ENCODE measurements at regions of chr19 and their contacts with region 1.

Region 1: DNA sequence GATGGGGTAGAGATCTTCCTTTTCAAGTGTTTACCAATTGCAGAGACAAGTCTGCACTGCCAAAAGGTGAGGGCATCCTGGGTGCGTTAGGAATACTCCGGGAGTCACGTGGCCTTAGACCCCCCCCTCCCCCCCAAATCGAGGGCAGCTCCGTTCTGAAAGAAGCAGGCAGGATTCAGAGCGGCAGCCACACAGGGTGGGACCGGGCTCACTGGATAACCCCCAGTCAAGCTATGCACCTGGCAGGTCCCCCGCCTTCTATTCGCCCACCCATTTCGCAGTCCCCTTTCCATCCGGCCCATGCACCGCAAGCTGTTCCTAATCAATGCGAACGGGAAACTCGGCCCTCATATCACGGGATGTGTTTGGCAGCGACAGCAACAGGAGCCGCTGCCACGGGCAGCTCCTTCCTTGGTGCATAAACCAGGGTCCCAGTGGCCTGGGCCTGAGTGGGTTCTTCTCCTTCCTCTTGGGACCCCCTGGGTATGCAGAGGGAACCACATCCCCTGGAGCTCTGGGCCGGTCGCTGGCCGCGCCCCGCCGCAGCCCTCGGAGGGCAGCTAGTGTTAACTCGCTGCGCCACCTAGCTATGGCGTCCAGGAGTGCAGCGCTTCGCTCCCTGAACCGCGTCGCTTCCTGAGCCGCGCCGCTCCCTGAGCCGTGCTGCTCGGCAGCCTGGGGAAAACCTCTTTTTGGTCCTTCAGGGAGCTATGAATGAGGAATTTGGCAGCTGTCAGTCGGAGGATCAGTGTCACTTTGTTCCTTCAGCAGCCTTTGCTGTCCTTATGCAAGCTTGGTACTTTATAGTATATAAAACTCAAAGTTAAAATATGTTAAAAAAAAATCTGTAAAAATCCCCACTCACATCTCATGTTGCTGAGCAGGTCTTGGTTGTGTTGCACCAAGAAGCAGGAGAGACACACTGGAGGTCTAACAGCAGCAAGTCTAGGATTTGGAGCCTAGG is 41.4 kb downstream of the LYL1 start:
- DNase-seq: peak; percentile 11
- ATAC-seq: peak; percentile 99
- H3K4me3 ChIP-seq: peak overlapping the region; percentile 34; the same call in 1 of the 2 replicates
- H3K27ac ChIP-seq: no peak overlapping the region
- H3K4me1 ChIP-seq: no peaks in the 10 kb centered on the region
- H3K27me3 ChIP-seq: peaks cover 9 to 11% of the 10 kb centered on the region in 2 experiments
- CTCF ChIP-seq: peak; percentile 94 to 97 (median 96); a peak in 5 of 6 replicates
- EP300 ChIP-seq: no peak
- POLR2A ChIP-seq: no peak
- RAD21 ChIP-seq: peak; percentile 80

Region 2: GRCh38 chr19:12610540-12611360 is 450.5 kb before region 1 on chr19 and contains the starts of genes ZNF490 and ZNF791:
- CTCF ChIA-PET with region 1: no interaction called
- POLR2A ChIA-PET with region 1: no interaction called
- RAD21 ChIA-PET with region 1: no interaction called
- SMC1A ChIA-PET with region 1: no interaction called
- in situ Hi-C with region 1: no loop called
- intact Hi-C with region 1: no loop called
- DNase-seq: peak; percentile 89
- ATAC-seq: peak; percentile 83
- H3K4me3 ChIP-seq: peak within 1 kb of the TSS; percentile 96
- H3K27ac ChIP-seq: peak within 1 kb of the TSS; percentile 95
- H3K4me1 ChIP-seq: 0 out of 2 replicates have a peak, but pooled peaks cover 7% of the 10 kb centered on the region
- H3K27me3 ChIP-seq: no peaks in the 10 kb centered on the region
- CTCF ChIP-seq: no peak
- EP300 ChIP-seq: 0 out of 4 replicates have a peak, but pooled peaks of 1 of the 2 experiments have one; percentile 16
- POLR2A ChIP-seq: peak; percentile 98
- RAD21 ChIP-seq: no peak
- polyA plus RNA-seq, gene ZNF490: 0.57 to 1.4 TPM
- polyA plus RNA-seq, gene ZNF791: 7.5 to 9.2 TPM

Region 3: DNA sequence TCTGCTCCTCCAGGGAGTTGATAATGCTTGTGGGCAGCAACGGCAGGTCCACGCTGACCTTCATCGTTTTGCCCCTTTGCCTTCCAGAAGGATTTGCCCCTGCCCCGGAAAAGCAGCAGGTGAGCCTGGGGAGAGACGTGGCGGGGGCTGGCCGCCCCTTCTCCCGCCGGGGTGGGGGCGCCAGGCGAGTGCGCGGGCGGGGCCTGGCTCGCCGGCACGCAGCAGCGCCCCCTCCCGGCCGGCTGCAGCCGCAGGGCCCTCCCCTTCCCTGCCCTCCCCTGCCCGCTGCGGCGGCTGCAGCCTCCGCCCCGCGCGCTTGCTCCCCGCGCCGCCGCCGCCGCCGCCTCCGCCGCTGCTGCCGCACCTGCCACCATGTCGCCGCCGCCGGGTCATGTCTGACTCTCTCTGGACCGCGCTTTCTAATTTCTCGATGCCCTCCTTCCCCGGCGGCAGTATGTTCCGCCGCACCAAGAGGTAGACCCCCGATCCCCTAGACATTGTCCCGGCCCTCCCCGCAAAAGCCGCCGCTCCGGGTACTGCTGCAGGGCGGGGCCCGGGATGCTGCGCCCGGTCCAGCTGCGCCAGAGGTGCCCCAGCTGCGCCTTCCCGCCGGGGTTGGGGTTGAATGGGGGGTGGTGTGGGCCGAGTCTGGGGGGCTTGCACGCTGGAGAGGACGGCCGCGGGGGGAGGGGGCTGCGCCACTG is 222.9 kb before region 1 on chr19 and contains the start of gene MAST1:
- CTCF ChIA-PET with region 1: no interaction called
- POLR2A ChIA-PET with region 1: no interaction called
- RAD21 ChIA-PET with region 1: no interaction called
- SMC1A ChIA-PET with region 1: no interaction called
- in situ Hi-C with region 1: no loop called
- intact Hi-C with region 1: no loop called
- DNase-seq: no peak
- ATAC-seq: peak; percentile 75
- H3K4me3 ChIP-seq: no peak within 1 kb of the TSS
- H3K27ac ChIP-seq: no peak within 1 kb of the TSS
- H3K4me1 ChIP-seq: peaks cover 7% of the 10 kb centered on the region; the same call in 1 of the 2 replicates
- H3K27me3 ChIP-seq: peaks cover 8 to 40% of the 10 kb centered on the region in 2 experiments
- CTCF ChIP-seq: peak; percentile 27 to 58 (median 42); a peak in 4 of 6 replicates
- EP300 ChIP-seq: no peak
- POLR2A ChIP-seq: no peak
- RAD21 ChIP-seq: no peak
- polyA plus RNA-seq, gene MAST1: 0.08 TPM in 1 of 2 experiments, not detected in the other

Region 4: GRCh38 chr19:13044231-13044836 is 16.9 kb before region 1 on chr19:
- CTCF ChIA-PET with region 1: interaction called, 29 read pairs
- POLR2A ChIA-PET with region 1: no interaction called
- RAD21 ChIA-PET with region 1: interaction called, 5 read pairs
- SMC1A ChIA-PET with region 1: interaction called, 6 read pairs
- in situ Hi-C with region 1: no loop called
- intact Hi-C with region 1: no loop called
- DNase-seq: no peak
- ATAC-seq: no peak
- H3K4me3 ChIP-seq: no peak overlapping the region
- H3K27ac ChIP-seq: no peak overlapping the region
- H3K4me1 ChIP-seq: no peaks in the 10 kb centered on the region
- H3K27me3 ChIP-seq: peaks cover 0 to 1% of the 10 kb centered on the region in 2 experiments; a peak in 2 of 4 replicates
- CTCF ChIP-seq: no peak
- EP300 ChIP-seq: peak in 1 of 2 experiments; percentile 27; a peak in 1 of 4 replicates
- POLR2A ChIP-seq: no peak
- RAD21 ChIP-seq: no peak

Measured in GM12878 (cell line).